ENCODE measurements at regions of chr1 and their contacts with region 1.

Region 1: DNA sequence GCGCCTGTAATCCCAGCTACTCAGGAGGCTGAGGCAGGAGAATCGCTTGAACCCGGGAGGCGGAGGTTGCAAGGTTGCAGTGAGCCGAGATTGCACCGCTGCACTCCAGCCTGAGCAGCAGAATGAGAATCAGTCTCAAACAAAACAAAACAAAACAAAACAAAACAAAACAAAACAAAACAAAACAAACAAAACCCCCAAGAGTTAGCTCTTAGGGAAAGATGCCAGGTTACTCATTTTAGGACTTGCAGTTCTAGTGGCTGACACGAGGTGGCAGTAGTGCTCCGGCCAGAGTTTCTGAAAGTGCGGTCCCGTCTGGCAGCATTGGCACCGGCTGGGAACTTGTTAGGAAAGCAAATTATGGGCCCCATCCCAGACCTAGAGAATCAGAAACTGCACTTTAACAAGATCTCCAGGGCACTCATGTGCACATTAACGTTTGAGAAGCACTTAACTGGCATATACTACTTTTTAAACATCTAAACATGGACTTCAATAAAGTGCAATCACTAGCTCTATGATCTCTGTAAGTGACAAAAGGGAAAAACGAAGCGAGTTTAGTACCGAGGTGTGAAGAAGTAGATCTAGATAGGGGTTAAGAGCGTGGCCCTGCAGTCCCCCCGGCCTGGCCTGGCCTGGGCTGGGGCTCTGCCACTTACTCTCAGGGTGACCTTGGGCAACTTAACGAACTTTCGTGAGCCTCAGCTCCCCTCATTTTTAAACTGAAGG is 41.9 kb upstream of the TNFRSF1B start:
- DNase-seq: peak; percentile 86
- ATAC-seq: peak; percentile 50
- H3K4me3 Mint-ChIP-seq: no peak overlapping the region
- H3K27ac Mint-ChIP-seq: peak overlapping the region; percentile 35
- H3K4me1 Mint-ChIP-seq: peaks cover 45% of the 10 kb centered on the region
- H3K27me3 Mint-ChIP-seq: peaks cover 15% of the 10 kb centered on the region

Region 2: GRCh38 chr1:11961230-11961629 is 163.6 kb before region 1 on chr1:
- CTCF ChIA-PET with region 1: no interaction called
- POLR2A ChIA-PET with region 1: no interaction called
- DNase-seq: no peak
- ATAC-seq: no peak
- H3K4me3 Mint-ChIP-seq: no peak overlapping the region
- H3K27ac Mint-ChIP-seq: no peak overlapping the region
- H3K4me1 Mint-ChIP-seq: no peaks in the 10 kb centered on the region
- H3K27me3 Mint-ChIP-seq: no peaks in the 10 kb centered on the region

Region 3: GRCh38 chr1:12143631-12144155 is 18.8 kb after region 1 on chr1:
- CTCF ChIA-PET with region 1: interaction called, 94 read pairs
- POLR2A ChIA-PET with region 1: interaction called, 3 read pairs
- DNase-seq: no peak
- ATAC-seq: no peak
- H3K4me3 Mint-ChIP-seq: no peak overlapping the region
- H3K27ac Mint-ChIP-seq: peak overlapping the region; percentile 76
- H3K4me1 Mint-ChIP-seq: peaks cover 64% of the 10 kb centered on the region
- H3K27me3 Mint-ChIP-seq: no peaks in the 10 kb centered on the region

Region 4: GRCh38 chr1:12184008-12184681 is 59.3 kb after region 1 on chr1:
- CTCF ChIA-PET with region 1: interaction called, 118 read pairs
- POLR2A ChIA-PET with region 1: interaction called, 3 read pairs
- DNase-seq: no peak
- ATAC-seq: no peak
- H3K4me3 Mint-ChIP-seq: no peak overlapping the region
- H3K27ac Mint-ChIP-seq: no peak overlapping the region
- H3K4me1 Mint-ChIP-seq: peaks cover 74% of the 10 kb centered on the region
- H3K27me3 Mint-ChIP-seq: no peaks in the 10 kb centered on the region

Region 5: GRCh38 chr1:12215118-12215961 is 90.5 kb after region 1 on chr1:
- CTCF ChIA-PET with region 1: interaction called, 369 read pairs
- POLR2A ChIA-PET with region 1: interaction called, 8 read pairs
- DNase-seq: no peak
- ATAC-seq: no peak
- H3K4me3 Mint-ChIP-seq: no peak overlapping the region
- H3K27ac Mint-ChIP-seq: no peak overlapping the region
- H3K4me1 Mint-ChIP-seq: peaks cover 15% of the 10 kb centered on the region
- H3K27me3 Mint-ChIP-seq: peaks cover 8% of the 10 kb centered on the region

Region 6: DNA sequence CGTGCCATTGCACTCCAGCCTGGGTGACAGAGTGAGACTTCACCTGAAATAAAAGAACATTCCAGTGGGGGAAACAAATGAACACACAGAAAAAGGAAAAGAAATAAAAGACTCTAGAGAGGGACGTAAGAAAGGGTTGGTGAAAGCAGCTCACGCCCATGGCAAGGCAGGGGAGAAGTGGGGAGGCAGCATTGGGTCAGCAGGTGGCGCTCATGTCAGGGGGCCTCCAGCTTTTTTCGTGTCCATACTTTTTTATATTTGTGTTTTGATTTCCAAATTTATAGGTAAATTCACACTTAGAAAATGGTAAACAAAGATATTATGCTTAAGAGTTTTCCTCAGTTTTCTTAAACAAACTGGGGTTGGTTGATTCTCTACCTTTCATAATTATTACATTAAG is 150.5 kb after region 1 on chr1:
- CTCF ChIA-PET with region 1: interaction called, 22 read pairs
- POLR2A ChIA-PET with region 1: no interaction called
- DNase-seq: peak; percentile 58
- ATAC-seq: no peak
- H3K4me3 Mint-ChIP-seq: no peak overlapping the region
- H3K27ac Mint-ChIP-seq: no peak overlapping the region
- H3K4me1 Mint-ChIP-seq: no peaks in the 10 kb centered on the region
- H3K27me3 Mint-ChIP-seq: no peaks in the 10 kb centered on the region